Panc1 (cell line): ENCODE measurements at regions of chr7 and their contacts with region 1.

Region 1: DNA sequence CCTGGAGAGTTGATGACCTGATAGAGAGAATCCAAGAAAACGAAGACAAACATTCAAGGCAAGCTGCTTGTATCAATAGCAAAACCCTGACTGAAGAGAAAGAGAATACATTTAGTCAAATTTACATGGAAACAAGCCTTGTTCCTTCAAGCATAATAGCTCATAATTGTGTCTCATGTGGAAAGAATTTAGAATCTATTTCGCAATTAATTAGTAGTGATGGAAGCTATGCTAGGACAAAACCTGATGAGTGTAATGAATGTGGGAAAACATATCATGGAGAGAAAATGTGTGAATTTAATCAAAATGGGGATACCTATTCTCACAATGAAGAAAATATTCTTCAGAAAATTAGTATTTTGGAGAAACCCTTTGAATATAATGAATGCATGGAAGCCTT is 18.0 kb downstream of the RBAK start:
- DNase-seq: no peak
- ATAC-seq: no peak
- H3K4me3 ChIP-seq: no peak overlapping the region
- H3K27ac ChIP-seq: no peak overlapping the region
- H3K4me1 ChIP-seq: no peaks in the 10 kb centered on the region
- H3K27me3 ChIP-seq: no peaks in the 10 kb centered on the region
- CTCF ChIP-seq: no peak

Region 2: DNA sequence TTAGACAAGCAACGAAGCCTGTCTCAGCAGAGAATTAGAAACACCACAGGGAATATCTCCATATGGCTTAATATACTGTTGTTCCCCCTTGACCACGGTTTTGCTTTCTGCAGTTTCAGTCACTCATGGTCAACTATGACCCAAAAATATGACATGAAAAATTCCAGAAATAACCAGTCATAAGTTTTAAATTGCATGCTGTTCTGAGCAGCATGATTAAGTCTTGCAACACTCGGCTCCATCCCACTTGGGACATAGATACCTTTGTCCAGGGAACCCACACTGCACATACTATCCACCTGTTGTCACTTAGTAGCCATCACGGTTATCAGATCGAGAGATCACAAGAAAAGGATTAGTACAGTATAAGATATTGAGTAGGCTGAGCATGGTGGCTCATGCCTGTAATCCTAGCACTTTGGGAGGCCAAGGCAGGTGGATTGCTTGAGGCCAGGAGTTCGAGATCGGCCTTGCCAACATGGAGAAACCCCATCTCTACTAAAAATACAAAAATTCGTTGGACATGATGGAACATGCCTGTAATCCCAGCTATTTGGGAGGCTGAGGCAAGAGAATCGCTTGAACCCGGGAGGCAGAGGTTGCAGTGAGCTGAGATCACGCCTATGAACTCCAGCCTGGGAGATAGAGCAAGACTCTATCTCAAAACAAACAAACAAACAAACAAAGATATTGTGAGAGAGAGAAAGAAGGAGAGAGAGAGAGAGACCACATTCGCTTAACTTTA is 442.1 kb before region 1 on chr7:
- CTCF ChIA-PET with region 1: no interaction called
- POLR2A ChIA-PET with region 1: no interaction called
- in situ Hi-C with region 1: no loop called
- intact Hi-C with region 1: no loop called
- DNase-seq: no peak
- ATAC-seq: no peak
- H3K4me3 ChIP-seq: no peak overlapping the region
- H3K27ac ChIP-seq: no peak overlapping the region
- H3K4me1 ChIP-seq: no peaks in the 10 kb centered on the region
- H3K27me3 ChIP-seq: no peaks in the 10 kb centered on the region
- CTCF ChIP-seq: no peak

Region 3: DNA sequence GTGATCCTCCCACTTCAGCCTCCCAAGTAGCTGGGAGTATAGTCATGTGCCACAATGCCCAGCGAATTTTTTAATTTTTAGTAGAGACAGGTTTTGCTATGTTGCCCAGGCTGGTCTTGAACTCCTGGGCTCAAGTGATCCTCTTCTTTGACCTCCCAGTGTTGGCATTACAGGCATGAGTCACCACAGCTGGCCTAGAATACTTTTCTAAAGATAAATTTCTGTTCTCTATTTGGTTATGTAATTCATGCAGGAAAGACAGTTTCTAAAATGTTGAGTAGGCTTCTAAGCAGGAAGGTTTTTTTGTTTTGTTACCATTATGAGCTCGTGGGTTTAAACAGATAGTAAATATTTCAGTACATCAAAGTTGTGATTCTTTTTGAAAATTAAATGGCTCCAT is 13.0 kb before region 1 on chr7:
- CTCF ChIA-PET with region 1: no interaction called
- POLR2A ChIA-PET with region 1: no interaction called
- in situ Hi-C with region 1: no loop called
- intact Hi-C with region 1: loop called (anchors 1 kb)
- DNase-seq: no peak
- ATAC-seq: no peak
- H3K4me3 ChIP-seq: no peak overlapping the region
- H3K27ac ChIP-seq: no peak overlapping the region
- H3K4me1 ChIP-seq: no peaks in the 10 kb centered on the region
- H3K27me3 ChIP-seq: no peaks in the 10 kb centered on the region
- CTCF ChIP-seq: no peak